ENCODE measurements at regions of chr19 and their contacts with region 1.

Region 1: DNA sequence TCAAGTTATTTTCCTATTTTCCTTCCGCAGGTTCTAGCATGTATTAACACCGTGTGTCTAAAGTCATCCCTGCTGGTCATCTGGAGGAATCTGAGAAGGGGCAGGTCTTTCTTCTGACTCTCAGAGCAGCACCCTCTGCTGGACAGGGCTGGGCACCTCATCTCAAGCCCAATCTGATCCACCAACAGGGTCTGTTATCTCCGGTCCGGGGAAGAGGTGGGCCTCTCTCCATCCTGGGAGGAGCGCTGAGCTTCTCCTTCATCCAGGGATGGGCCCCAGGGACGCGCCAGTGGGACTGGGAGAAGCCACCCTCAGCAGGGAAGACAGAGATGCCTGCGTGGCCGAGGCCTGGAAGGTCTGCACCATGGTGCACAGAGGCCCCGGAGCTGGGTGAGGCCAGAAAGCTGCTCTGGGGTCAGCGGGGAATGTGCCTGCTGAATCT is 26.0 kb upstream of the ZNF331 start:
- DNase-seq: peak; percentile 64 to 85
- H3K4me3 ChIP-seq: no peak overlapping the region
- H3K27ac ChIP-seq: no peak overlapping the region
- H3K4me1 ChIP-seq: no peaks in the 10 kb centered on the region
- H3K27me3 ChIP-seq: peaks cover 0 to 16% (median 0%) of the 10 kb centered on the region in 3 donors
- CTCF ChIP-seq: peak in 5 of 7 experiments; percentile 55 to 68 (median 60)
- EP300 ChIP-seq: no peak
- POLR2A ChIP-seq: no peak

Region 2: DNA sequence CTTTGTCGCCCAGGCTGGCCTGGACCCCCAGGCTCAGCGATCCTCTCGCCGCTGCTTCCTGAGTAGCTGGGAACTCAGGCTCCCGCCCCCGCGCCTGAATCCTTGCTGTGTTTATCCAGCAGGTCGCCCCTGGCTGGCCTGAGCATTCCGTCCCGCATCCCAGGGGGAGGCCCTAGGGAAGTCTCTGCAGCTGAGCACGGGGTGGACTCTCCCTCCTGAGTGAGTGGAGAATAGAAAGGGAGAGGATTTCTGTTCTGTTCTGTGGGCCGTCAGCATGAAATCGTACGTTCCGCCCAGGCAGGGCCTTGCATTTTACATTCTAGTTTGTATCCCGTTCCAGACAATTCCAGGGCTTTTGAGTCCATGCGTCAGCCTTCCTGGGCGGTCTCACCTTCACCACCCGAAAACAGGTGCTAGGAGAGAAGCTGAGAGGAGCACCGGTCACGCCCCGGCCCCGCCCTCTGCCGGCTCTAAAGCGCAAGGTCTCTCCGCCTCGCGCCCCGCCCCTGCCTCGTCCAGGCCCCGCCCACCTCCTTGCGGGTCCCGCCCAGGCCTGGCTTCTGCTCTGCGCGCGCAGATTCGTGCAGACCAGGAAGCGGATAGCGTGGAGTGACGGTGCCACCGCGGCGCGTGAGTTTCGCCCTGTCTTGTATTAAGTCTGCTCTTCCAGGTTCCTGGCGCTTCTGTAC is 80.4 kb before region 1 on chr19 and contains the start of gene ZNF761:
- intact Hi-C with region 1: loop called (anchors 10 kb)
- DNase-seq: peak; percentile 99
- H3K4me3 ChIP-seq: peak within 1 kb of the TSS; percentile 59 to 83 (median 73)
- H3K27ac ChIP-seq: peak within 1 kb of the TSS; percentile 85 to 90 (median 86)
- H3K4me1 ChIP-seq: peaks cover 6 to 23% (median 20%) of the 10 kb centered on the region in 4 donors
- H3K27me3 ChIP-seq: no peaks in the 10 kb centered on the region
- CTCF ChIP-seq: peak in 5 of 7 experiments; percentile 25 to 61 (median 27)
- EP300 ChIP-seq: no peak
- POLR2A ChIP-seq: peak in 1 of 4 donors; percentile 71
- total RNA-seq, gene ZNF761: 0.58 to 16.3 (median 5.4) TPM

Region 3: GRCh38 chr19:53463263-53463662 is 48.7 kb before region 1 on chr19:
- intact Hi-C with region 1: no loop called
- DNase-seq: peak in 1 of 2 donors; percentile 64
- H3K4me3 ChIP-seq: no peak overlapping the region
- H3K27ac ChIP-seq: peak overlapping the region in 1 of 5 donors; percentile 29
- H3K4me1 ChIP-seq: peaks cover 2 to 23% (median 8%) of the 10 kb centered on the region in 4 donors
- H3K27me3 ChIP-seq: peaks cover 0 to 21% (median 0%) of the 10 kb centered on the region in 3 donors
- CTCF ChIP-seq: no peak
- EP300 ChIP-seq: no peak
- POLR2A ChIP-seq: no peak

Region 4: DNA sequence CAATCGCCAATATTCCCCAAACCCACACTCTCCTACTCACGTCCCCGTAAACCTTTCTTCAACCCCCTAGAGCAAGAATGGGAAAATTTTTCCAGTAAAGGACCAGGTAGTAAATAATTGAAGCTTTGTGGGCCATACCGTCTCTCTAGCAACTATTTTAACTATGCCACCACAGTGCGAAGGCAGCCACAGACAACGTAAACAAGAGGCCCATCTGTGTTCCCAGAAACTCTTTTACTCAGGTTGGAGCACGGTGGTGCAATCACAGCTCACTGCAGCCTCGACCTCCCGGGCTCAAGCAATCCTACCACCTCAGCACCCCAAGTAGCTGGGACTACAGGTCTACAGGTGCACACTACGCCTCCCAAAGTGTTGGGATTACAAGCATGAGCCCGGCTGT is 122.8 kb after region 1 on chr19:
- intact Hi-C with region 1: no loop called
- DNase-seq: no peak
- H3K4me3 ChIP-seq: no peak overlapping the region
- H3K27ac ChIP-seq: no peak overlapping the region
- H3K4me1 ChIP-seq: no peaks in the 10 kb centered on the region
- H3K27me3 ChIP-seq: no peaks in the 10 kb centered on the region
- CTCF ChIP-seq: no peak
- EP300 ChIP-seq: no peak
- POLR2A ChIP-seq: no peak

Measured in stomach (tissue), 19 donors.